A673 (cell line): ENCODE measurements at regions of chr17 and their contacts with region 1.

Region 1: GRCh38 chr17:51540151-51540550 is 279.8 kb downstream of the UTP18 start:
- DNase-seq: peak; percentile 9
- H3K4me3 ChIP-seq: no peak overlapping the region
- H3K27ac ChIP-seq: no peak overlapping the region
- H3K4me1 ChIP-seq: no peaks in the 10 kb centered on the region
- H3K27me3 ChIP-seq: peaks cover 13% of the 10 kb centered on the region
- CTCF ChIP-seq: 0 out of 2 replicates have a peak, but pooled peaks have one; percentile 27

Region 2: GRCh38 chr17:51298508-51299371 is 241.4 kb before region 1 on chr17:
- CTCF ChIA-PET with region 1: interaction called, 3 read pairs
- POLR2A ChIA-PET with region 1: no interaction called
- intact Hi-C with region 1: loop called (anchors 10 kb)
- DNase-seq: peak; percentile 68
- H3K4me3 ChIP-seq: no peak overlapping the region
- H3K27ac ChIP-seq: no peak overlapping the region
- H3K4me1 ChIP-seq: no peaks in the 10 kb centered on the region
- H3K27me3 ChIP-seq: no peaks in the 10 kb centered on the region
- CTCF ChIP-seq: peak; percentile 82

Region 3: GRCh38 chr17:51563961-51564360 is 23.8 kb after region 1 on chr17:
- CTCF ChIA-PET with region 1: no interaction called
- POLR2A ChIA-PET with region 1: no interaction called
- intact Hi-C with region 1: no loop called
- DNase-seq: no peak
- H3K4me3 ChIP-seq: no peak overlapping the region
- H3K27ac ChIP-seq: no peak overlapping the region
- H3K4me1 ChIP-seq: no peaks in the 10 kb centered on the region
- H3K27me3 ChIP-seq: peaks cover 52% of the 10 kb centered on the region
- CTCF ChIP-seq: no peak